CD8-positive, alpha-beta T cell (primary cell): ENCODE measurements at regions of chr5 and their contacts with region 1.

Region 1: GRCh38 chr5:14821100-14821845 is 50.3 kb downstream of the ANKH start:
- DNase-seq: no peak
- ATAC-seq: no peak
- H3K4me3 ChIP-seq: no peak overlapping the region
- H3K4me3 Mint-ChIP-seq: no peak overlapping the region
- H3K27ac ChIP-seq: no peak overlapping the region
- H3K27ac Mint-ChIP-seq: no peak overlapping the region
- H3K4me1 ChIP-seq: no peaks in the 10 kb centered on the region
- H3K4me1 Mint-ChIP-seq: peaks cover 55% of the 10 kb centered on the region
- H3K27me3 ChIP-seq: no peaks in the 10 kb centered on the region
- H3K27me3 Mint-ChIP-seq: no peaks in the 10 kb centered on the region
- CTCF ChIP-seq: no peak

Region 2: GRCh38 chr5:14787801-14788579 is 33.3 kb before region 1 on chr5:
- CTCF ChIA-PET with region 1: no interaction called
- POLR2A ChIA-PET with region 1: no interaction called
- intact Hi-C with region 1: loop called in 1 of 2 experiments (anchors 5 kb)
- DNase-seq: no peak
- ATAC-seq: no peak
- H3K4me3 ChIP-seq: no peak overlapping the region
- H3K4me3 Mint-ChIP-seq: no peak overlapping the region
- H3K27ac ChIP-seq: no peak overlapping the region
- H3K27ac Mint-ChIP-seq: peak overlapping the region; percentile 81
- H3K4me1 ChIP-seq: peaks cover 17% of the 10 kb centered on the region
- H3K4me1 Mint-ChIP-seq: peaks cover 43% of the 10 kb centered on the region
- H3K27me3 ChIP-seq: no peaks in the 10 kb centered on the region
- H3K27me3 Mint-ChIP-seq: no peaks in the 10 kb centered on the region
- CTCF ChIP-seq: no peak